Activated T-helper 1 cell treated with anti-CD3 and anti-CD28 coated beads, Interleukin-12 subunit alpha, Interleukin-12 subunit beta, Interleukin-2, Interleukin-4 antibody, amounts not matched to agents 30 ng/mL and 10 ng/mL and 1 ng/mL, durations not matched to agents 14 hours and 24 hours and 36 hours (primary cell): ENCODE measurements at regions of chr14 and their contacts with region 1.

Region 1: DNA sequence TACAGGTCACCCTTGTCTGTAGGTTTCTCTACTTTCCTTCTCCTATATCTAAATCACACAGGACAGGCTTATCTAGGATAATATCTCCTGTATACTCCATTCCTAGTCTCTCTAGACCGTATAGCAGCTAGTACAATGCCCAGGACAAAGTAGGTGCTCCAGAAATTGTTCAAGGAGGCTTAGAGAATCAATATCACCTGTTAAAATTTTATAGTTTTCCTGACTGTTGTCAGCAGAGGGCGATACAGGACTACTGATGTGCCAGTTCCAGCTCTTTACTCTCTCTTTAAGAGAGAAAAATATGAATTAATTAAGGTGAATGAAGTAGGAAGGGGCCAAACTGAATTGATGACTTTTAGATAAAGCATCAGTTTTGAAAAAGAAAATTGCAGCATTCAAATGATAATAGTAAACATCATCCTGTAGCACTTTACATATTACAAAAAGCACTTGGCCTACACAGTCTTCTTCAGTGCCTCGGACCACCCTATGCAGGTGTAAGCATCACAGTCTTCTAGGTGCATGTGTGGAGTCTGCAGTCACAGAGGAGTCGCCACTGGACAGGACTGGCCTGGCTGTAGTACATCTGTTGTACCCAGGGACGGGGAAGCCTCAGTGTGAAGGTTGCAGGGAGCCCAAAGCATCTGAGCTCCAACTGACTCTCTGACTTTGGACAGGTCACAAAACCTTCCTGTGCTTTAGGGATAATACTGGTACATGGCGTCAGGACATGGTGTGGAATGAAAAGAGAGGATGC is 61.9 kb upstream of the MAX start:
- DNase-seq: peak; percentile 23
- H3K4me3 Mint-ChIP-seq: no peak overlapping the region
- H3K27ac Mint-ChIP-seq: no peak overlapping the region
- H3K4me1 Mint-ChIP-seq: peaks cover 50% of the 10 kb centered on the region
- H3K27me3 Mint-ChIP-seq: peaks cover 2% of the 10 kb centered on the region

Region 2: GRCh38 chr14:65258391-65258832 is 94.2 kb after region 1 on chr14:
- intact Hi-C with region 1: no loop called
- DNase-seq: no peak
- H3K4me3 Mint-ChIP-seq: no peak overlapping the region
- H3K27ac Mint-ChIP-seq: no peak overlapping the region
- H3K4me1 Mint-ChIP-seq: peaks cover 30% of the 10 kb centered on the region
- H3K27me3 Mint-ChIP-seq: no peaks in the 10 kb centered on the region

Region 3: DNA sequence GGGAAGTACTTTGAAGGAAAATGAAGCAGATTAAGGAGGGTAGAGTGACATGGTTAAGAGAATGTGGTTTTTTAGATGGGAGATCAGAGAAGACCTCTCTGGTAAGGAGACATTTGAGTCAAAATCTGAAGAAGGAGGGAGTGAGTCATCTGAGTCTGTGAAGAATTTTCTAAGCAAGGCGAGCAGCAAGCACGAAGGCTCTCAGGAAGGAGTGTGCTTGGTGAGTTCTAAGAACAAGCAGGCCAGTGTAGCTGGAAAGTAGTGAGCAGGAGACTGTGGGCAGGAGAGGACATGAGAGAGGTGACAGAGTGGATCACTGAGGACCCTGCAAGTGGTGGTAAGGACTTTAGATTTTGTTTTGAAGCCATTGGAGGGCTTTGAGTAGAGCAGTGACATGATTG is 171.9 kb after region 1 on chr14:
- intact Hi-C with region 1: loop called (anchors 2 kb)
- DNase-seq: peak; percentile 63
- H3K4me3 Mint-ChIP-seq: peak overlapping the region; percentile 91
- H3K27ac Mint-ChIP-seq: peak overlapping the region; percentile 96
- H3K4me1 Mint-ChIP-seq: peaks cover 59% of the 10 kb centered on the region
- H3K27me3 Mint-ChIP-seq: no peaks in the 10 kb centered on the region

Region 4: DNA sequence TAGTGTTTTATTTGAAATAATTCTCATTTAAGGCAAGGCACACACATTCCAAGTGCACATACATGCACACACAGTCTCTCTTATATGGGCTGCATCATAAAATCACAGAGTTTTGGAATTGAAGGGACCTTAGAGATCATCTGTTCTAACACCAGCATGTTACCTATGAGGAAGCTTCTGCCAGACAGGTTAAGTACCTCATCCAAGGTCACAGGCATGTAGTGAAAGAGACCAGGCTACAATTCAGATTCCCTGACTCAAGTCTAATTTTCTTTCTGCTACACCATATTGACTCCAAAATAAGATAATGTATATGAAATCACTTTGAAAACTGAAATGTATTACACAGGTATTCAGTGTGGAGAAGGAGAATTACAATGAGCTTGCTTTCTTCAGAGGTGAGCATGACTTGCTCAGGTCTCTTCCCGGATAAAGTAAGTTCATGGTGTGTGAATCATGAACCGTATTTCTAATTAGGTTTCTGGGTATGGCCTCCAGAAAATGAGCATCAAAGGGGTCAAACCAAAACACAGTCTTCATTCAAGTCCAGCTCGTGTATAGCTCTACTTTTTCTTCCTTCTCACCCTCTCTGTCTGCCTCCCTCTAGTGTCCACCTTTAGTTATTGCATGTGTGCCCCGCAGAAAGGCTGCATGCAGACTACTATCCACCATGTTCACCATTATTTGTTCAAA is 660.2 kb after region 1 on chr14:
- intact Hi-C with region 1: loop called (anchors 1 kb)
- DNase-seq: peak; percentile 53
- H3K4me3 Mint-ChIP-seq: no peak overlapping the region
- H3K27ac Mint-ChIP-seq: no peak overlapping the region
- H3K4me1 Mint-ChIP-seq: peaks cover 28% of the 10 kb centered on the region
- H3K27me3 Mint-ChIP-seq: peaks cover 9% of the 10 kb centered on the region

Region 5: GRCh38 chr14:66070509-66071319 is 906.5 kb after region 1 on chr14:
- intact Hi-C with region 1: loop called (anchors 1 kb)
- DNase-seq: peak; percentile 48
- H3K4me3 Mint-ChIP-seq: no peak overlapping the region
- H3K27ac Mint-ChIP-seq: no peak overlapping the region
- H3K4me1 Mint-ChIP-seq: peaks cover 13% of the 10 kb centered on the region
- H3K27me3 Mint-ChIP-seq: peaks cover 16% of the 10 kb centered on the region